ENCODE measurements at regions of chr5 and their contacts with region 1.

Region 1: GRCh38 chr5:168679515-168679920 is 100.3 kb upstream of the PANK3 start:
- DNase-seq: peak; percentile 56
- ATAC-seq: peak; percentile 69
- H3K4me3 ChIP-seq: no peak overlapping the region
- H3K27ac ChIP-seq: no peak overlapping the region
- H3K4me1 ChIP-seq: peaks cover 23% of the 10 kb centered on the region
- H3K27me3 ChIP-seq: peaks cover 0 to 9% of the 10 kb centered on the region in 2 experiments; a peak in 2 of 5 replicates
- CTCF ChIP-seq: peak; percentile 86
- EP300 ChIP-seq: no peak
- POLR2A ChIP-seq: no peak
- RAD21 ChIP-seq: peak; percentile 73

Region 2: DNA sequence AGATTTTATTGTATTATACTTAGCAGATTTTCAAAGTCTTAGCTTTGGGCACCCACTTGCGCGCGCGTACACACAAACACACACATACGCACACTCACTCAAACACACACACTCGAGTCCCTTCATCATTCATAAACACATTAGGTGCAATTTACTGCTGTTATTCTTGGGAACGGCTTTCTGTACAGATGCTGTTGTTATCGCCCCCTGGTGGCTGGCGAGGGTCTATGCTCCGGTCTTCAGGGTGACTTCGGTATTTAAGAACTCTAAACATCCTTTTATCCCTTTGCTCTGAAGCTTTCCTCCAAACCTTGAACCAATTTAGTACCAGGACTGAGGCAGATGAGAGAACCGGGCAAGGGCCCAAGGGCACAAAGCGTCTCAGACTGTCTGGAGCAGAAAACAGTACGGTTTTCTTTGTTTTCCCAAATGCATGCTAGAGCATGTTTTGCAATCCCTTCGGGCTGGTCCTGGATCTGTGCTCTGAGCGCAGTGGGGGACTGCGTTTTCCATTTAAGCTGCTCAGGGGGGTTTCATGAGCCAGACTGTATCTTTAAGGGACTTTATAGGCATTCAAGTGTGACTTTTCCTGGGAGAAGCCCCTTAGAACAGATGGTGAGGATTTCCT is 623.1 kb after region 1 on chr5:
- CTCF ChIA-PET with region 1: interaction called, 10 read pairs
- POLR2A ChIA-PET with region 1: no interaction called
- in situ Hi-C with region 1: loop called (anchors 10 kb)
- intact Hi-C with region 1: loop called (anchors 1 kb)
- DNase-seq: peak; percentile 44
- ATAC-seq: peak; percentile 84
- H3K4me3 ChIP-seq: no peak overlapping the region
- H3K27ac ChIP-seq: no peak overlapping the region
- H3K4me1 ChIP-seq: no peaks in the 10 kb centered on the region
- H3K27me3 ChIP-seq: peaks cover 2 to 28% of the 10 kb centered on the region in 2 experiments; a peak in 3 of 5 replicates
- CTCF ChIP-seq: peak; percentile 78
- EP300 ChIP-seq: no peak
- POLR2A ChIP-seq: no peak
- RAD21 ChIP-seq: no peak

Region 3: GRCh38 chr5:169583424-169584204 is 904.1 kb after region 1 on chr5 and contains the start of gene SPDL1:
- CTCF ChIA-PET with region 1: no interaction called
- POLR2A ChIA-PET with region 1: no interaction called
- in situ Hi-C with region 1: loop called (anchors 25 kb)
- intact Hi-C with region 1: no loop called
- DNase-seq: peak; percentile 93
- ATAC-seq: peak; percentile 99
- H3K4me3 ChIP-seq: peak within 1 kb of the TSS; percentile 84 to 93 (median 90)
- H3K27ac ChIP-seq: peak within 1 kb of the TSS; percentile 78
- H3K4me1 ChIP-seq: peaks cover 12% of the 10 kb centered on the region
- H3K27me3 ChIP-seq: no peaks in the 10 kb centered on the region; a peak in 1 of 5 replicates
- CTCF ChIP-seq: no peak
- EP300 ChIP-seq: no peak
- POLR2A ChIP-seq: peak; percentile 76 to 82
- RAD21 ChIP-seq: 0 out of 2 replicates have a peak, but pooled peaks have one; percentile 9
- total RNA-seq, gene SPDL1: 36.6 and 61.4 TPM in 2 replicates